ENCODE measurements at regions of chr12 and their contacts with region 1.

Region 1: GRCh38 chr12:103771466-103771865 is 69.6 kb downstream of the NT5DC3 start:
- DNase-seq: no peak
- H3K4me3 ChIP-seq: no peak overlapping the region
- H3K27ac ChIP-seq: no peak overlapping the region
- H3K27me3 ChIP-seq: no peaks in the 10 kb centered on the region
- CTCF ChIP-seq: peak; percentile 81

Region 2: GRCh38 chr12:103833891-103834290 is 62.4 kb after region 1 on chr12:
- CTCF ChIA-PET with region 1: interaction called, 10 read pairs
- POLR2A ChIA-PET with region 1: no interaction called
- DNase-seq: no peak
- H3K4me3 ChIP-seq: no peak overlapping the region
- H3K27ac ChIP-seq: no peak overlapping the region
- H3K27me3 ChIP-seq: no peaks in the 10 kb centered on the region
- CTCF ChIP-seq: 0 out of 2 replicates have a peak, but pooled peaks have one; percentile 15

Region 3: GRCh38 chr12:103858953-103859601 is 87.6 kb after region 1 on chr12:
- CTCF ChIA-PET with region 1: interaction called, 12 read pairs
- POLR2A ChIA-PET with region 1: no interaction called
- DNase-seq: peak; percentile 93
- H3K4me3 ChIP-seq: no peak overlapping the region
- H3K27ac ChIP-seq: peak overlapping the region; percentile 94
- H3K27me3 ChIP-seq: no peaks in the 10 kb centered on the region
- CTCF ChIP-seq: no peak

Region 4: GRCh38 chr12:103868215-103868614 is 96.7 kb after region 1 on chr12:
- CTCF ChIA-PET with region 1: interaction called, 242 read pairs
- POLR2A ChIA-PET with region 1: interaction called, 3 read pairs
- DNase-seq: no peak
- H3K4me3 ChIP-seq: no peak overlapping the region
- H3K27ac ChIP-seq: no peak overlapping the region
- H3K27me3 ChIP-seq: no peaks in the 10 kb centered on the region
- CTCF ChIP-seq: no peak

Region 5: DNA sequence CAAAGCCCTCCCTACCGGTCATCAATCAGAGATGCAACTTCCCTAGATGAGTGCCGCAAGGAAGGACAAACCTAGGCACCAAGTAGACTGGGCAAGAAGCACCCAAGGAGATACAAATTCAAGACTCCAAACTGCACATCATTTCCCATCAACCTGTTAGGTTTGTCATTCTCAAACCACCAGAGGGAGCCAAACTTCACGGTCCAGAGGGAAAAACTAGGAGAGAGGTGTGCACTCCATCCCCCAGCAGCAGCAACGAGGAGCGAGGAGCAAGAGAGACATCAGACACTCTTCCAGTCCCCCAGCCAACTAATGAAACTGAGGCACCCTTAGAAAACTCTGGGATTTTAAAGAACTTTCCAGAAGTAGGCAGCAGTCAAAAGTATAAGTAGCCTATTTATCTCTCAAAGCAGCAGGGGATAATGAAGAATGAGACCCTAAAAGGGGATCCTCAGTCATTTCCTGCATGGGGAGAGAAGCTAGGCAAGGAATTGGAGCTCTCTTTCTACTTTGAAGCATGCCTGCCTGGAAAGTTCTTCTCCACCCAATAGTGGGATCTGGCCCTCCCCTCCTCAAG is 106.6 kb after region 1 on chr12:
- CTCF ChIA-PET with region 1: interaction called, 12 read pairs
- POLR2A ChIA-PET with region 1: no interaction called
- DNase-seq: peak; percentile 29
- H3K4me3 ChIP-seq: no peak overlapping the region
- H3K27ac ChIP-seq: no peak overlapping the region
- H3K27me3 ChIP-seq: no peaks in the 10 kb centered on the region
- CTCF ChIP-seq: peak; percentile 84